MCF 10A (cell line): ENCODE measurements at regions of chr15 and their contacts with region 1.

Region 1: DNA sequence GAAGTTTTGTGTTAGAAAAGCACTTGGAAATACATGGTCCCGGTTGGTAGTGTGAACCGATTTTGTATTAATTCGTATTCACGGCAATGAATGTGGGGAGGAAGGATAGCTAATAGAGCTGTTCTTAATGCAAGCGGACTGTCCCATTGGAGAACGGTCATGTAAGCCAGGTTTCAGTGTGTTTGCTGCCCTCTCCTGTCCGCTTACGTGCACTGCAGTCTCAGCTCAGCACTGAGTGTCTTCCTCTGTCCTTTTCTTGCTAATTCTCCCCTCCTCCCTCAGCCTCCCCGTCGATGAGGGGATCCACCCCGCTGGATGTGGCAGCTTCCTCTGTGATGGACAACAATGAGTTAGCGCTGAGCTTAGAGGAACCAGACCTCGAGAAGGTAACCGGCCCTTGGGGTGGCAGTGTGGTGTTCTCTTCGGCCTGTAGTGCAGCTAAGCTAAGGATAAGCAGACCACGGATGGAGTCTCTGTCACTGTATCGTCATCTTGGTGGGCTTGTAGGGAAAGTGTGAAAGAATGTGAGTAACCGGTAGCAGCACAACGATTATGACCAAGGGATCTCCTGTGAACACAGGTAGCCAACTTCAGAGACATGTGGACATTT is 267.5 kb upstream of the CHRM5 start:
- DNase-seq: peak; percentile 79
- H3K4me3 Mint-ChIP-seq: no peak overlapping the region
- H3K27ac Mint-ChIP-seq: no peak overlapping the region
- H3K4me1 Mint-ChIP-seq: no peaks in the 10 kb centered on the region
- H3K27me3 Mint-ChIP-seq: peaks cover 15% of the 10 kb centered on the region
- CTCF ChIP-seq: peak; percentile 86

Region 2: DNA sequence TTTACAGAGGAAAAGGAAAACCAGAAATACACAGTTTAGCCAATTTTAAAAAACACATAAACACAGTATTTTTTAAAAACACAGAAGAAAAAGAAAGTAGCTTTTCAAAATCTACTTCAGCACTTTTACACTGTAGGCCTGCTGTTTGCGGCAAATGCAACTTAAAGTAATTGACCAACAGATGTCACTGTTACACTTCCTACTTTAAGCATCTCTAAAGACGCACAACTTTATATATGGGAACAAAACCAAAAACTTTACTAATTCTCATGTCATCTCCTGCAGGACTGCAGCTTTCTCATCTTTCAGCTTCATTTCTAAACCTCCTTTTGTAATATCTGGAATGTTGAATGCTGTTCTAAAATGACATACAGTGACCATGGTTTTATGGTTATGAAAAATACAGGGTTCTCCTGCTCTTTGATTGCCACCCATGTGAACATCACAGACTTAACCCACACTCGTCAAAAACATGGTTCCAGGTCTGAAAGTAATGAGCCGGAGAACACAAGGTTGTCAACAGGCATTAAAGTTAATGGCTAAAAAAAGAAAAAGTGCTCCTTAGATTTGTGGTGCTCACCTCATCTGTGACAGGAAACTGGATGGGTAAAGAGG is 614.2 kb before region 1 on chr15:
- CTCF ChIA-PET with region 1: interaction called, 19 read pairs
- POLR2A ChIA-PET with region 1: no interaction called
- intact Hi-C with region 1: no loop called
- DNase-seq: peak; percentile 63
- H3K4me3 Mint-ChIP-seq: no peak overlapping the region
- H3K27ac Mint-ChIP-seq: no peak overlapping the region
- H3K4me1 Mint-ChIP-seq: no peaks in the 10 kb centered on the region
- H3K27me3 Mint-ChIP-seq: no peaks in the 10 kb centered on the region
- CTCF ChIP-seq: peak; percentile 42

Region 3: DNA sequence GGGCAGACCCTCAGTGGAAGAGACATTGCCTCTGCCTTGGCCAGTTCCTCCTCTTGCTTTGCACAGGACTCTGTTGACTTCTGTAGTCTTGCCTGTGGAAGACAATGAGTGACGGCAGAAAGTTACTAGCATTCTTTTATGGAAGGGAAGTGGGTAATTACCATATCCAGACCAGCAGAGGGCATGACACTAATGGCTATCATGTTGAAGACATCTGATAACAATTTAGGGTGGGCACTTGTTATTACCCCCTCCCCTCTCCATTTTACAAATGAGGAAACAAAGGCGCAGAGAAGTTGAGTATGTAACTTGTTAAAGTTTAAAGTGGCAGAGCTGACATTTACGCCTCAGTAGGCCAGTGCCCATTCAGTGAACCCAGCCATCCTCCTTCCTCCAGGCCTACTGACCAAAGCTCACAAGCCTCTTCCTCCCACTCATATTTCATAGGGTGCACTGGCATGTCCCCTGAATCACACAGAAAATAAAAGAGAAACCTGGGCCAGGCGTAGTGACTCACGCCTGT is 458.1 kb before region 1 on chr15:
- CTCF ChIA-PET with region 1: interaction called, 26 read pairs
- POLR2A ChIA-PET with region 1: no interaction called
- intact Hi-C with region 1: no loop called
- DNase-seq: peak; percentile 60
- H3K4me3 Mint-ChIP-seq: no peak overlapping the region
- H3K27ac Mint-ChIP-seq: peak overlapping the region; percentile 64
- H3K4me1 Mint-ChIP-seq: peaks cover 16% of the 10 kb centered on the region
- H3K27me3 Mint-ChIP-seq: no peaks in the 10 kb centered on the region
- CTCF ChIP-seq: peak; percentile 36

Region 4: GRCh38 chr15:33292717-33293307 is 408.0 kb before region 1 on chr15:
- CTCF ChIA-PET with region 1: interaction called, 194 read pairs
- POLR2A ChIA-PET with region 1: interaction called, 18 read pairs
- intact Hi-C with region 1: loop called (anchors 1 kb)
- DNase-seq: peak; percentile 79
- H3K4me3 Mint-ChIP-seq: no peak overlapping the region
- H3K27ac Mint-ChIP-seq: no peak overlapping the region
- H3K4me1 Mint-ChIP-seq: peaks cover 20% of the 10 kb centered on the region
- H3K27me3 Mint-ChIP-seq: no peaks in the 10 kb centered on the region
- CTCF ChIP-seq: peak; percentile 88

Region 5: DNA sequence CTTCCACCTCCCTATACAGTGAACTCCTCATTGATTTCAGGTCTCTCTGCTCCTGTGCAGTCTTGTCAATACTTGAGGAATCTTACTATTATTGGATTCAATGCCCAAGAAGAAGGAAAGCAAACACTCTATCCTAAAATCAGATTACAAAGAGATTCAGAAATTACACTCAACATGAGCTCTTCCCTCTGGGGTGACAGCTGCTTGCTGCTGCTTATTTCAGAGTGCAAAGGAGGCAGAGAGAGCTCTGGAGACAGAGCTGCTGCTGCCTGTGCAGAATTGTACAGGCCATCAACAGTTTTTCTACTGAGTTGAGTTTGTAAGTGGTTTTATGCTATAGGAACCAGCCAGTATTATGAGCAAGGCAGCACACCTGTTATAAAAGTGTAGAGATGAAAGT is 382.9 kb before region 1 on chr15:
- CTCF ChIA-PET with region 1: interaction called, 10 read pairs
- POLR2A ChIA-PET with region 1: no interaction called
- intact Hi-C with region 1: no loop called
- DNase-seq: no peak
- H3K4me3 Mint-ChIP-seq: no peak overlapping the region
- H3K27ac Mint-ChIP-seq: no peak overlapping the region
- H3K4me1 Mint-ChIP-seq: peaks cover 6% of the 10 kb centered on the region
- H3K27me3 Mint-ChIP-seq: peaks cover 56% of the 10 kb centered on the region
- CTCF ChIP-seq: no peak

Region 6: GRCh38 chr15:33737687-33738601 is 37.1 kb after region 1 on chr15:
- CTCF ChIA-PET with region 1: interaction called, 24 read pairs
- POLR2A ChIA-PET with region 1: no interaction called
- intact Hi-C with region 1: no loop called
- DNase-seq: peak; percentile 61
- H3K4me3 Mint-ChIP-seq: no peak overlapping the region
- H3K27ac Mint-ChIP-seq: no peak overlapping the region
- H3K4me1 Mint-ChIP-seq: no peaks in the 10 kb centered on the region
- H3K27me3 Mint-ChIP-seq: no peaks in the 10 kb centered on the region
- CTCF ChIP-seq: peak; percentile 73

Region 7: GRCh38 chr15:33788906-33789540 is 88.2 kb after region 1 on chr15:
- CTCF ChIA-PET with region 1: no interaction called
- POLR2A ChIA-PET with region 1: no interaction called
- intact Hi-C with region 1: no loop called
- DNase-seq: peak; percentile 33
- H3K4me3 Mint-ChIP-seq: no peak overlapping the region
- H3K27ac Mint-ChIP-seq: no peak overlapping the region
- H3K4me1 Mint-ChIP-seq: peaks cover 5% of the 10 kb centered on the region
- H3K27me3 Mint-ChIP-seq: no peaks in the 10 kb centered on the region
- CTCF ChIP-seq: no peak